ENCODE measurements at regions of chr10 and their contacts with region 1.

Region 1: GRCh38 chr10:63720072-63720537 is 198.9 kb downstream of the REEP3 start:
- DNase-seq: peak; percentile 52

Region 2: GRCh38 chr10:63157845-63158624 is 562.1 kb before region 1 on chr10:
- in situ Hi-C with region 1: loop called (anchors 25 kb)
- DNase-seq: peak; percentile 85